Right ventricle myocardium inferior (tissue), 1 donor: ENCODE measurements at regions of chr1 and their contacts with region 1.

Region 1: GRCh38 chr1:23184212-23184934 is 15.7 kb upstream of the LUZP1 start:
- DNase-seq: no peak
- ATAC-seq: no peak

Region 2: GRCh38 chr1:22976461-22977243 is 207.7 kb before region 1 on chr1:
- intact Hi-C with region 1: loop called (anchors 2 kb)
- DNase-seq: no peak
- ATAC-seq: peak; percentile 89